ENCODE measurements at regions of chr2 and their contacts with region 1.

Region 1: DNA sequence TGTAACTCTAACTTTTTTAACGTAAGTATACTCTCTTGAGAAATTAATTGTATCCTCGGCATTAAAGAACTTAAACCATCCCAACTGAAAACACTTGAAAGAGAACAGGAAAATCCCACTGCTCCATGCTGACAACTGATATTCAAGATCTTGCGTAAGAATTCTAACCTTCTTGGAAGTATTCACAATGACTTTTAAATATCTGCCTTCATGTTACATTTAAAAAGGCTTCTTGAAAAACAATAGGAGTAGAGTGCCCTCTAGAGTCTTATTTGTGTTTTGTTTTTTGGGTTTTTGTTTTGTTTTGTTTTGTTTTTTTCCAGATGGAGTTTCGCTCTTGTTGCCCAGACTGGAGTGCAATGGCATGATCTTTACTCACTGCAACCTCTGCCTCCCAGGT is 65.4 kb upstream of the DNAJC10 start:
- DNase-seq: peak; percentile 74
- H3K4me3 ChIP-seq: 0 out of 2 replicates have a peak overlapping the region, but pooled peaks have one; percentile 44
- H3K27ac ChIP-seq: no peak overlapping the region
- H3K4me1 ChIP-seq: 0 out of 2 replicates have a peak, but pooled peaks cover 5% of the 10 kb centered on the region
- H3K27me3 ChIP-seq: no peaks in the 10 kb centered on the region

Region 2: GRCh38 chr2:182186132-182186735 is 464.5 kb before region 1 on chr2:
- in situ Hi-C with region 1: loop called (anchors 5 kb)
- DNase-seq: peak; percentile 51
- H3K4me3 ChIP-seq: no peak overlapping the region
- H3K27ac ChIP-seq: no peak overlapping the region
- H3K4me1 ChIP-seq: 0 out of 2 replicates have a peak, but pooled peaks cover 3% of the 10 kb centered on the region
- H3K27me3 ChIP-seq: no peaks in the 10 kb centered on the region

Measured in GM23248 (cell line).